Activated CD4-positive, alpha-beta memory T cell treated with anti-CD3 and anti-CD28 coated beads for 36 hours (primary cell): ENCODE measurements at regions of chr14 and their contacts with region 1.

Region 1: DNA sequence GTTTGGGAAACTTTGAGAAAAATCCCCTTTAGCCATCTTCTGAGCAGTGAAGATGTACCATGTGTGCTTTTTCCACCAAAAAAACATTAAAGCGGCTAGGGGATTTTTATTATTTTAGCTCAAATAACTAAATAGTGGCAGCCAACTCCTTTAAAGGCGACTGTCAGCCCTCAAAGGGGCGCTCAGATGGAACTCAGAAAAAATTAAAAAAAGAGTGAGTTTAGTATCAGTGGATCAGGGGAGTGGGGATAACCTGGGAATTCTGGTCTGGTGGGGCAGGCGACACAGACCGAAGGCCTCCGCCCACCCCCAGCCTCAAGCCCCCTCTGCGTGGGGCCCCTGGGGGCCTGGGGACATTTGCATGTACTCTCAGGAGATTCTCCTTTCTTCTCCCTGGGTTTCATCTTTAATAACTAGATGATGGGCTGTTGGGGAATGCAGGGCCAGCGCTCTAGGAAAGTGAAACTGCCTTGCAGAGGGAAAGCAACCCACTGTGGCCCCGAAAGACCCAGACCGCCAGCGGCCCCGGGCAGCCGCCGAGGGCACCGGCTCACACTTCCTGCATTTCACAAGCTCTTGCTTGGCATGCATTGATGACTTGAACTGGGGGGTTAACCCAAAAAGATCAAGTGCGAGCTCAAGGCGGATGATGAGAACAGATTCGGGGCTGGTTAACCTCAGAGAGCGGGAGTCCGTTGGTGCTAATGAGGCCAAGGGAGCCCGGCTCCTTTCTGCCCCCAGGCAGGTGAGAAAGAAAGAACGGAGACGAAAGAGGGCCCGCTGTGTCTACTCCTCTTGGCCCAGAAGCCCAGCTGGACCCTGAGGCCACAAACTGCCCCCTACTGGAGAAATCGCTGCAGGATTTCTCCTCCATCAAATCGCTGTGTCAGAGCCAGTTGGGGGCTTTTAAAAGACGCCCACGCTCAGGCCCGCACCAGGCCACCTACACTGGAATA is 7.3 kb upstream of the BATF start:
- DNase-seq: peak; percentile 77
- H3K4me3 Mint-ChIP-seq: peak overlapping the region; percentile 80
- H3K27ac Mint-ChIP-seq: peak overlapping the region; percentile 95
- H3K4me1 Mint-ChIP-seq: peaks cover 69% of the 10 kb centered on the region
- H3K27me3 Mint-ChIP-seq: no peaks in the 10 kb centered on the region

Region 2: GRCh38 chr14:75497191-75497590 is 17.8 kb before region 1 on chr14:
- CTCF ChIA-PET with region 1: interaction called, 13 read pairs
- POLR2A ChIA-PET with region 1: interaction called, 9 read pairs
- intact Hi-C with region 1: loop called (anchors 1 kb)
- DNase-seq: peak; percentile 75
- H3K4me3 Mint-ChIP-seq: peak overlapping the region; percentile 59
- H3K27ac Mint-ChIP-seq: peak overlapping the region; percentile 82
- H3K4me1 Mint-ChIP-seq: peaks cover 54% of the 10 kb centered on the region
- H3K27me3 Mint-ChIP-seq: no peaks in the 10 kb centered on the region

Region 3: DNA sequence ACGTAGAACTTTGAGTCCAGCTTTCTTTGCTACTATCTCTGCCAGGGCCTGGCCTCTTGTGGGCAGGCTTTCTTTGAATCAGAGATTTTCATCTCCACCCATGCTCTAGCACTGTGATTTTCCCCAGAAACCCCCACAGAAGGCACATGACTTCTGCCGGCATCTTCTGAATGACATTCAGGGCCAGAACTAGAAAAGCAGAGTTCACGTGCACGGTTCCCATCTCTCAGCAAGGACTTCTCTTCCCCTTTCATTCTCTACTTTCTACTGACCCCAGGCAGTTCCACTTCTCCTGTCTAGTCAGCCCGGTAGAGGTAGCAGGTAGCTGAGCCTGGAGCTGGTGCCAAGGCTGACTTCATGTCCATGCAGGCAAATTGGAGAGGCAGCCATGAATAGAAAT is 34.2 kb after region 1 on chr14:
- CTCF ChIA-PET with region 1: interaction called, 88 read pairs
- POLR2A ChIA-PET with region 1: interaction called, 172 read pairs
- intact Hi-C with region 1: no loop called
- DNase-seq: peak; percentile 75
- H3K4me3 Mint-ChIP-seq: peak overlapping the region; percentile 13
- H3K27ac Mint-ChIP-seq: peak overlapping the region; percentile 94
- H3K4me1 Mint-ChIP-seq: peaks cover 81% of the 10 kb centered on the region
- H3K27me3 Mint-ChIP-seq: no peaks in the 10 kb centered on the region